ENCODE measurements at regions of chr1 and their contacts with region 1.

Region 1: DNA sequence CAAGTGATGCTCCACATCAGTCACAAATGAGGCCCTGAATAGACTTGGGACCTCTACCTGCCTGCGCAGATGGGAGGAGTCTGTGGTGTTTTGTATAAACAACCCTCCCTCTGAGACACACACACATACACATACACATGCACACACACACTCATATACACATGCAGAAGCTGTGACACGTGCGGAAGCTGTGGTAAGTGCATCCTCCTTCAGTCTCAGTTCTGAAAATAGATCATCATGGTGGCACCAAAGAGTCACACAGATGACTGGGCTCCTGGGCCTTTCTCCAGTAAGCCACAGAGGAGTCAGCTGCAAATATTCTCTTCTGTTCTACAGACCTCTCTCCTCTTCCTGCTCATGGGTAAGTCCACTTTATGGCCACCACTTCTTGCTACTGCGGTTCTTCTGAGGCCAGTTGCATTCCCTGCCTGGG is at the start of gene LY9:
- DNase-seq: peak; percentile 65
- ATAC-seq: peak; percentile 81
- H3K4me3 Mint-ChIP-seq: peak within 1 kb of the TSS; percentile 92
- H3K27ac Mint-ChIP-seq: peak within 1 kb of the TSS; percentile 97
- H3K4me1 Mint-ChIP-seq: peaks cover 59% of the 10 kb centered on the region
- H3K27me3 Mint-ChIP-seq: no peaks in the 10 kb centered on the region
- total RNA-seq, gene LY9: 70.9 to 73.6 TPM

Region 2: DNA sequence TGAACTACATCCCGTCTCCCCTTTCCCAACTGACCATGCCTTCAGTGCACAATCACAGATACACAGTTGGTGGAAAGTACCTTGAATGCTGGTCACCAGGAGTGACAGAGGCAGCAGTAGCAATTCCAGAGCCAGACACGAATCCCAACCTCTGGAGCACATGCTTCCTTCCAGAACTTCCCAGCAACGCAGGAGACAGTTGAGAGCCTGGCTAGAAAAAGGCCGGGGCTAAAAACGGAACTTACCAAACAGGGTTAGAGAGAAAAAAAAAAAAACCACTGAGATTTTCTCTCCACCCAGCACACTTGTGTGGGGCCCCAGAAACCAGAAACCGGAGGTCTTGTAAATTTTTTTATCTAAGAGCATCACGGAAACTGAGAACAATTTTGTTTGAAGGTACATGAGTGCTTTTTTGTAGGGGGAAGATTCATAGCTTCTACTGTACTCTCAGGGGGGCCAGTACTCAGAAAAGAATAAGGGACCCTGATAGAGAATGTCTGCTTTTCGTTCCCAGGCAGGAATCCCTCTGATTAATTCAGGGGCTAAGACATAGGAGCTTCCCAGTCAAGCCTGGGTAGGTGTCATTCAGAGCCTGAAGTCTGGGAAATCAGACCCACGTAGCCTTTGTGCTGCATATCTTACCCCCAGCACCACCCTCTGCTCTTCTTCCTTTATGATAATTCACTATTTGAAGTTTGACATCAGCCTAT is 84.2 kb before region 1 on chr1 and contains the start of gene CD48:
- POLR2A ChIA-PET with region 1: interaction called, 22 read pairs
- DNase-seq: peak; percentile 53
- ATAC-seq: peak; percentile 38
- H3K4me3 Mint-ChIP-seq: no peak within 1 kb of the TSS
- H3K27ac Mint-ChIP-seq: no peak within 1 kb of the TSS
- H3K4me1 Mint-ChIP-seq: peaks cover 30% of the 10 kb centered on the region
- H3K27me3 Mint-ChIP-seq: no peaks in the 10 kb centered on the region
- total RNA-seq, gene CD48: 379 to 386 TPM

Region 3: GRCh38 chr1:160744199-160744851 is 51.6 kb before region 1 on chr1:
- POLR2A ChIA-PET with region 1: interaction called, 16 read pairs
- DNase-seq: no peak
- ATAC-seq: peak; percentile 74
- H3K4me3 Mint-ChIP-seq: peak overlapping the region; percentile 79
- H3K27ac Mint-ChIP-seq: peak overlapping the region; percentile 85
- H3K4me1 Mint-ChIP-seq: peaks cover 88% of the 10 kb centered on the region
- H3K27me3 Mint-ChIP-seq: no peaks in the 10 kb centered on the region

Region 4: GRCh38 chr1:160777486-160778089 is 18.4 kb before region 1 on chr1:
- POLR2A ChIA-PET with region 1: interaction called, 25 read pairs
- DNase-seq: no peak
- ATAC-seq: peak; percentile 44
- H3K4me3 Mint-ChIP-seq: no peak overlapping the region
- H3K27ac Mint-ChIP-seq: no peak overlapping the region
- H3K4me1 Mint-ChIP-seq: peaks cover 37% of the 10 kb centered on the region
- H3K27me3 Mint-ChIP-seq: no peaks in the 10 kb centered on the region

Region 5: GRCh38 chr1:160823296-160823695 is 27.3 kb after region 1 on chr1:
- POLR2A ChIA-PET with region 1: no interaction called
- DNase-seq: no peak
- ATAC-seq: no peak
- H3K4me3 Mint-ChIP-seq: no peak overlapping the region
- H3K27ac Mint-ChIP-seq: no peak overlapping the region
- H3K4me1 Mint-ChIP-seq: peaks cover 10% of the 10 kb centered on the region
- H3K27me3 Mint-ChIP-seq: no peaks in the 10 kb centered on the region